ENCODE measurements at regions of chr17 and their contacts with region 1.

Region 1: GRCh38 chr17:74212913-74213791 is at the start of gene TTYH2:
- DNase-seq: peak; percentile 92 to 94 (median 94)
- ATAC-seq: peak; percentile 72 to 87 (median 83)
- H3K4me3 ChIP-seq: peak within 1 kb of the TSS; percentile 43 to 75 (median 64)
- H3K27ac ChIP-seq: peak within 1 kb of the TSS; percentile 49 to 93 (median 85)
- H3K4me1 ChIP-seq: peaks cover 0 to 82% (median 49%) of the 10 kb centered on the region in 12 donors
- H3K27me3 ChIP-seq: no peaks in the 10 kb centered on the region
- CTCF ChIP-seq: peak in 5 of 12 donors; percentile 14 to 39 (median 20)
- POLR2A ChIP-seq: peak in 1 of 2 donors; percentile 60
- total RNA-seq, gene TTYH2: 17.3 to 34.6 (median 24.6) TPM

Region 2: DNA sequence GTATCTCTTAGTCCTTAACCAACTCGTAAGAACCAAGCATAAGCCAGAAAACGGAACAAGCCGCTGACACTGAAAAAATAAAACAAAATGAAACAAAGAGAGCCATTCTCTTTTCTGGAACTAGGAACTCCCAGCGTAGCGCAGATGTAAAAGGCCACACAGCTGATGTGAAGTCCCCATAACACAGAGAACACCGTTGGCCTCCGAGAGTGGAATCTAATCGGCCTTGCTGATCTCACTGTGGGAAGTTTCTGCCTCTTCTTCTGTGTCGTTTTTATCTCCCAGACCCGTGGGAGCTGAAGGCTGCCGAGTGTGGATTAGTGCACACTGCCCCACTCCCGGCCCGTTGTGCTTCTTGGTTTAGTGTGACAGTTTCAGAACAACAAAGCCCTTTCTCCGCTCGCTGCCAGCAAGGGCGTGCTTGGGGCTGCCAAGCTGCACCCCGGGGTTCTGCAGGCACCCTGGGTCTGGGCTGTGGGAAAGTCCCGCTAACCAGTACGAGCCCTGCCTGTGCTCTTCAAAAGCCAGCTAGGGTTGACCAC is 22.0 kb after region 1 on chr17:
- intact Hi-C with region 1: loop called in 3 of 10 experiments (anchors 2 kb)
- DNase-seq: no peak
- ATAC-seq: peak in 2 of 4 donors; percentile 15 to 36
- H3K4me3 ChIP-seq: peak overlapping the region in 7 of 12 donors; percentile 1 to 43 (median 26)
- H3K27ac ChIP-seq: peak overlapping the region in 11 of 12 donors; percentile 23 to 91 (median 62)
- H3K4me1 ChIP-seq: peaks cover 0 to 62% (median 24%) of the 10 kb centered on the region in 12 donors
- H3K27me3 ChIP-seq: no peaks in the 10 kb centered on the region
- CTCF ChIP-seq: no peak
- POLR2A ChIP-seq: no peak

Region 3: DNA sequence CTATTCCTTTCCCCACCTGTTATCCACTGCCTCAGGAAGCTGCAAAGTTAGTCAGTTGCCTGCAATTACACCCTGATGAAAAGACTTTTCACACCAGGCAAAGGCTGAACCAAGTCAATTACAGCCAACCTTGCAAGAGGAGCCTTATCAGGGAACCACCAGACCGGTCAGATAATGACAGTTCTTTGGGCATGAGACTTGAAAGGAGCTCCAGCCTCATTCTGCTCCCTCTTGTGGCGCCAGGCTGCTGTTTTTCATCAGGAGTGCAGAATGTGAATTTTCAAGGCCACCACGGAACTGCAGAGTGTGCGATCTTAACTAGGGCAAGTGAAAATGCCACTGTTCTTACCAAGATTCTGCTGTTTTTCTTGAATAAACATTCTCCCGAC is 83.4 kb after region 1 on chr17:
- intact Hi-C with region 1: loop called (anchors 1 to 2 kb)
- DNase-seq: peak; percentile 68 to 87 (median 76)
- ATAC-seq: peak; percentile 74 to 84 (median 81)
- H3K4me3 ChIP-seq: peak overlapping the region in 1 of 12 donors; percentile 5
- H3K27ac ChIP-seq: peak overlapping the region; percentile 53 to 97 (median 84)
- H3K4me1 ChIP-seq: peaks cover 0 to 18% (median 10%) of the 10 kb centered on the region in 12 donors
- H3K27me3 ChIP-seq: no peaks in the 10 kb centered on the region
- CTCF ChIP-seq: peak; percentile 50 to 78 (median 66)
- POLR2A ChIP-seq: no peak

Region 4: DNA sequence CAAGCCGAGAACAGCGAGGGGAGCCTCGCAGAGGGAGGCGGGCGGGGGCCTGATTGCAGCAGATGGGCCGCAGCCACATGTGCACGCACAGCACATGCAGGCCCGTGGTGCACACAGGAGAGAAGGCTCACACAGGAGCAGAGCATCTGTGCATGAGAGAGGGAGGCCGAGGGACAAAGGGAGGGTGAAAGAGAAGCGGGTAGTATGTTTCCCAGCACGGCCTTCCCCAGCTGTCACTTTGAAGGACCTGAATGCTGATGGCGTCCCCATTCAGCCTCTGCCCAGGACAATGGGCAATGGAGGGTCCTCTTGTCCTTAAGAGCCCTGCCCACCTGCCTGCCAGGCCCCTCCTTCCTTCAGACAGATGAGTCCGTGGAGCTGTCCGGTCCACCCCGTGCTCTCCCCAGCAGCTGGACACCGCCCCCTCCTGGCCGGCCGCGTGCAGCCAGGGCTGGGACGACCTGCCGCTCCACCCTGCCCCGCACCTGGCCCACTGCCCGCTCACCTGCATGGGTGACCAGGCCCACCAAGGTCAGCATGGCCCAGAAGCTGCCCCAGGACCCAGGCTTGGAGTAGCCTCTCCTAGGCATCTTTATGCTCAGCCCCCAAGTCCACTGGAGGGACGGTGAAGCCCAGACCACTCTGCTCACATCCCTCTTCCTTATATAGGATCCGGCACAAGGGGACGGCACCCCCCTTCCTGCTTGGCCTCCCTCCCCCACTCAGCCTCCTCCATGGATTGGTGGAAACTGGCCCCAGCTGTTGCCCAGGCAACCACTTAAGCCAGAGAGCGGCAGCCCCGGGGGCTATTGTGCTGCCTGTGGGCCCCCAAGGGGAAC is 148.3 kb after region 1 on chr17 and contains the start of gene BTBD17:
- intact Hi-C with region 1: loop called in 8 of 10 experiments (anchors 2 to 10 kb)
- DNase-seq: peak; percentile 54 to 81 (median 61)
- ATAC-seq: peak; percentile 79 to 91 (median 82)
- H3K4me3 ChIP-seq: no peak within 1 kb of the TSS
- H3K27ac ChIP-seq: no peak within 1 kb of the TSS
- H3K4me1 ChIP-seq: peaks cover 0 to 24% (median 7%) of the 10 kb centered on the region in 12 donors
- H3K27me3 ChIP-seq: peaks cover 18 to 61% (median 52%) of the 10 kb centered on the region in 9 donors
- CTCF ChIP-seq: peak; percentile 63 to 84 (median 76)
- POLR2A ChIP-seq: no peak
- total RNA-seq, gene BTBD17: not detected

Region 5: DNA sequence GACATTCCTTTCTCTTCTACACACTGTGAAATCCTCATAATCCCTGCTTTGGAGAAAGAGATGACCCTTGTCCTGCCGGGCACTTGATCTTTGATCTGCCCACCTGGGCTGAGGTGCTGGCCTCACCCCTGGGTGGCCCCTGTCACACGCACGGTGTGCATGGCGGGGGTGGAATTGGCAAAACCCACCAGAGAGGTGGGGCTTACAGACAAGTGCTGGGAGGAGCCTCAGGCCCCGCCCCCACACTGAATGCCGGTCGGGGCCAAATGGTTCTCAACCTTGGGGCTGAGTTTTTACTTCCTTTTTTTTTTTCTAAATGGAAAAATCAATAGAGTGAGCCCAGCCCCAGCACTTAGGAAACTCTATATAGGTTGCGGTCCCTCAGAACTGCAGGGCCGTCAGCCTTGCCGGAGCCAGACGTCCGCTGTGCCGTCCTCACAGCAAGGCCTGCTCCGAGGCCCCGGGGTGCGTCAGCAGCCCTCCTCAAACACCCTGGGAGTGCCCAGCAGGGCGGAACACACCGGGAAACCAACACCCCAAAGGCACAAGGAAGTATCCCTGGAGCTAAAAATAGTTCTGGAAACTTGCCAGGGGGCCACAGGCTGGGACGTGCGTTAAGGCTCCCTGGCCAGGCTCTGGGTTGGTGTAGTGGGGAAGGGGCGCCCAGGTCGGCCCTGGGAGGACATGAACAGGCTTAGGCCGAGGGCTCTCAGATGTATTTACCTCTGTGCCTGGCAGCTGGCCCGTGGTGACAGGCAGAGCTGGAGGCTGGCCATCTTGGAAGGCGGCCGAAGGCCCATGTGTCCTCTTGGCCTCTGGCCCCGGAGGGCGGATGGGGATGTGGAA is 229.7 kb after region 1 on chr17:
- intact Hi-C with region 1: loop called in 1 of 10 experiments (anchors 10 kb)
- DNase-seq: peak; percentile 90 to 95 (median 94)
- ATAC-seq: peak; percentile 68 to 85 (median 84)
- H3K4me3 ChIP-seq: peak overlapping the region in 9 of 12 donors; percentile 28 to 41 (median 38)
- H3K27ac ChIP-seq: peak overlapping the region; percentile 74 to 95 (median 90)
- H3K4me1 ChIP-seq: peaks cover 5 to 61% (median 55%) of the 10 kb centered on the region in 12 donors
- H3K27me3 ChIP-seq: no peaks in the 10 kb centered on the region
- CTCF ChIP-seq: no peak
- POLR2A ChIP-seq: peak in 1 of 2 donors; percentile 37

Measured in heart left ventricle (tissue), 16 donors.